Activated CD8-positive, alpha-beta T cell treated with anti-CD3 and anti-CD28 coated beads for 36 hours (primary cell): ENCODE measurements at regions of chr11 and their contacts with region 1.

Region 1: DNA sequence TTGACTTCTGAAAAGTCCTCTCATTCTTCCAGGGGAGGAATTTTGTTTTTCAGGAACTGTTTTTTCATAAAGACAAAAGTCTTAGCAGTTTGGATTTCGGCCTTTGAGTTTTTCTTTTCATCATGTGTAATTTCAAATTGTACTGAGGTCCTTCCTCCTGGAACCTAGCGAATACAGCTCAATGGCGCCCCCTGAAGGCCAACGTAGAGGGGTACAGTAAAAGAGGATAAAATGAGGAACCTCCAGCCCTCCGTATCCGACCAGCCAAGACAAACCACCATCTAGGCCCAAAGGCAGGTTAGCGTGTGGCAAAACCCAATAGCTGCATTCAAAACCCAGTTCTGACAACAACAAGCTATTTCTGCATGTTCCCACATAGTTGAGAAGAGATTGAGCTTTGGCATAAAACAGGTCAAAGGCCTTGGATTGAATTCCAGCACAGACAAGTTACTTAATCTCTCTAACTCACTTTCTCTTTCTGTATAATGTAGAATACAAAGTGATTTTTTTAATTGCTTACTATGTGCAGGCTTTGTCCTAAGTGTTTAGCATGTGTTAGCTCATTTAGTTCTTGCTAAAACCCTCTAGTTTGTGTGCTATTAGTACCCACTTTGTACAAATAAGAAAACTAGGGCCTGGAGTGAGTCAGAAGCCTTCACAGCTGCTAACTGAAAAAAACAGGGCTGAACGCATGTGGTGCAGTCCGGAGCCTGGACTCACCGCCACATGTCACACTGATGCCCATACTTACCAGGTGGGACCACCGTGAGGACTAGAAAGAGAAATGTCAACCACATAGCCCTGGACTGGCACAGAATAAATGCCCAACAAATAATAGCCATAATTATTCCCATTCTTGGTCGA is 43.2 kb upstream of the ETS1 start:
- DNase-seq: peak; percentile 94
- ATAC-seq: peak; percentile 71
- H3K4me3 Mint-ChIP-seq: peak overlapping the region; percentile 72
- H3K27ac Mint-ChIP-seq: peak overlapping the region; percentile 97
- H3K4me1 Mint-ChIP-seq: peaks cover 66% of the 10 kb centered on the region
- H3K27me3 Mint-ChIP-seq: no peaks in the 10 kb centered on the region
- CTCF ChIP-seq: peak; percentile 72

Region 2: GRCh38 chr11:128039140-128040021 is 591.2 kb before region 1 on chr11:
- CTCF ChIA-PET with region 1: interaction called, 5 read pairs
- POLR2A ChIA-PET with region 1: no interaction called
- intact Hi-C with region 1: loop called (anchors 5 kb)
- DNase-seq: peak; percentile 91
- ATAC-seq: peak; percentile 90
- H3K4me3 Mint-ChIP-seq: peak overlapping the region; percentile 58
- H3K27ac Mint-ChIP-seq: peak overlapping the region; percentile 93
- H3K4me1 Mint-ChIP-seq: peaks cover 42% of the 10 kb centered on the region
- H3K27me3 Mint-ChIP-seq: no peaks in the 10 kb centered on the region
- CTCF ChIP-seq: peak; percentile 45

Region 3: GRCh38 chr11:128279866-128280265 is 350.7 kb before region 1 on chr11:
- CTCF ChIA-PET with region 1: interaction called, 23 read pairs
- POLR2A ChIA-PET with region 1: no interaction called
- intact Hi-C with region 1: no loop called
- DNase-seq: no peak
- ATAC-seq: no peak
- H3K4me3 Mint-ChIP-seq: no peak overlapping the region
- H3K27ac Mint-ChIP-seq: no peak overlapping the region
- H3K4me1 Mint-ChIP-seq: peaks cover 13% of the 10 kb centered on the region
- H3K27me3 Mint-ChIP-seq: peaks cover 2% of the 10 kb centered on the region
- CTCF ChIP-seq: no peak

Region 4: DNA sequence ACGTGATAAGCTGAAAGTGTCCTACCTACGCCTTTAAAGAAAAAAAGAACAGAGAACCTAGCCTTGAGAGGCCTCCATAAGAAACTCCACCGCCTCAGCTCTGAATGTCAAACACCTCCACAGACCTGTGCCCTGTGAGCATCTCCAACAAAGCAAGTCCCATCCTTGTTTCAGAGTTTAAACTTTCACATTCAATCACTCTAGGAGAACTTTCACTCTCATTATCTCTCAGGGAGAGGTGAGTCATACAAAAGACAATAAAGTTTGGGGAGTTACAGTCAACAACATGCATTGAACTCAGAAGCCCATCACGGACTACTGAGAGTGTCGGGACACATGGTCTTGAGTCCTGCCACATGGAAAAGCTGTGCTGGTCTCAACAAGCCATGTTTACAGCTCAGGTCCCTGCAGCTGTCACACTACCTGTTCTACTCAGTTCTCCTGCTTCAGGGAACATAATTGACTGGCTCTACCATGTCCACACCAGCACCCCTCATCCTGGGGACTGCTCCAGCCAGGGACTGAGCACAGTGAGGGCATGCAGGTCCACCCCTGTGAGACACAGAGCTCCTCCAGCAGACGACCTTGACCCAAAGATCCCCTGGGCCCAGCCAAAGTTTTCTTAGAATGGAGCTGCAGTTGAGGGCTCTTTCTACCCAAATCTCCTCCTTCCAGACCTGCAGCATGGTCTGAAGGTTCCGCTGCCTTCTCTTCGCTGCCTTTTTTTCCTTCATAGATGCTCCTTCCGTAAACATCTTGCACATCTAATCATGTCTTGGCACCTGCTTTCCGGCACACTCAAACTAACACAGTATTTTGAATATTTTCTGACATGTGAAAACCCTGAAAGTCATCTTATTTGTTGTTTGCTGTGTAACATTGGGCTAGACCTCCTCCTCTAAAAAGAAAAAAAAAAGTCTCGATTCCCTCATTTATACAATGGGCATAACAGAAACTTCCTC is 158.2 kb before region 1 on chr11:
- CTCF ChIA-PET with region 1: interaction called, 93 read pairs
- POLR2A ChIA-PET with region 1: interaction called, 5 read pairs
- intact Hi-C with region 1: loop called (anchors 5 kb)
- DNase-seq: peak; percentile 84
- ATAC-seq: peak; percentile 63
- H3K4me3 Mint-ChIP-seq: peak overlapping the region; percentile 77
- H3K27ac Mint-ChIP-seq: peak overlapping the region; percentile 97
- H3K4me1 Mint-ChIP-seq: peaks cover 92% of the 10 kb centered on the region
- H3K27me3 Mint-ChIP-seq: no peaks in the 10 kb centered on the region
- CTCF ChIP-seq: no peak

Region 5: DNA sequence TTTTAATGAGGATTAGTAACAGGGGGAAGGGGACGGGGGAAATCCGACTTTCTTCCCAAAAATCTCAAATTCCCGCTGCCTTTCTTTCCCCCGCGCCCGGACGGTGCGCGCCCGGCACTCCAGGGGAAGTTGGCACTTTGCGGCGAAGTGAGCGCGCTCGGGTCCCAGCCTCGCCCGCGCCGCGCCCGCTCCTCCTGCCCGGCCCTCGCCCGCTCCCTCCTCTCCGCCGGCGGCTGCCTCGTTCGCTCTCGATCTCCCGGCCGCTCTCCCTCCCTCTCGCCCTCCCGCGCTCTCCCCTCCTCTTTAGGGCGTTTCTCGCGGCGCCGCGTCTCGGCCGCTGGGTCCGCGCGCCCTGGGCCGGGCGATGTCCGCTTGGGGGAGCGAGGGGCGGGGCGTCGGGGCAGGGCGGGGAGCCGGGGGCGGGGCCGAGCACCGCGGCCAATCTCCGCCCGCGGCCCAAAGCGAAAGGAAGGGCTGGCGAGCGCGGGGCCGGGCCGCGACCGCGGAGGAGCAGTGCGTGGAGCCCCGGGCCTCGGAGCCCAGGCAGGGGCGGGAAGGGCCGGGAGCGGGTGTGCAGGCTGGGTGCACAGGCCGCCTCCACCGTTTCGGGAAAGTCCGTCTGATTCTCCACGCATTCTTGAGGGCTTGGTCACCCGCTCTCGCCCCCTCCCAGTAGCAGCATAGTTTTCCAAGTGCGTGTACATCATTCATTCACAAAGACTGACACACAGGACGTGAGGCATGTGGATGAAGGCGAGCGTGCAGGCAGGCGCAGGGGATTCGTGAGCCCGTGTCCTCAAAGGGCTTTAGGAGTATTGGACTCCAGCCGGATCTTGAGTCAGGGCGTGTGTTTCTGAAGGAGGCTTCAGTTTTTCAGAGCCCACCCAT is 108.3 kb before region 1 on chr11:
- CTCF ChIA-PET with region 1: interaction called, 400 read pairs
- POLR2A ChIA-PET with region 1: interaction called, 78 read pairs
- intact Hi-C with region 1: loop called (anchors 1 kb)
- DNase-seq: peak; percentile 92
- ATAC-seq: peak; percentile 77
- H3K4me3 Mint-ChIP-seq: peak overlapping the region; percentile 95
- H3K27ac Mint-ChIP-seq: peak overlapping the region; percentile 96
- H3K4me1 Mint-ChIP-seq: peaks cover 37% of the 10 kb centered on the region
- H3K27me3 Mint-ChIP-seq: no peaks in the 10 kb centered on the region
- CTCF ChIP-seq: no peak

Region 6: GRCh38 chr11:128582496-128583366 is 47.9 kb before region 1 on chr11:
- CTCF ChIA-PET with region 1: interaction called, 6 read pairs
- POLR2A ChIA-PET with region 1: interaction called, 5 read pairs
- intact Hi-C with region 1: loop called (anchors 2 kb)
- DNase-seq: peak; percentile 35
- ATAC-seq: no peak
- H3K4me3 Mint-ChIP-seq: peak overlapping the region; percentile 55
- H3K27ac Mint-ChIP-seq: peak overlapping the region; percentile 72
- H3K4me1 Mint-ChIP-seq: peaks cover 47% of the 10 kb centered on the region
- H3K27me3 Mint-ChIP-seq: no peaks in the 10 kb centered on the region
- CTCF ChIP-seq: no peak